GM18951 (cell line): ENCODE measurements at regions of chrX and their contacts with region 1.

Region 1: DNA sequence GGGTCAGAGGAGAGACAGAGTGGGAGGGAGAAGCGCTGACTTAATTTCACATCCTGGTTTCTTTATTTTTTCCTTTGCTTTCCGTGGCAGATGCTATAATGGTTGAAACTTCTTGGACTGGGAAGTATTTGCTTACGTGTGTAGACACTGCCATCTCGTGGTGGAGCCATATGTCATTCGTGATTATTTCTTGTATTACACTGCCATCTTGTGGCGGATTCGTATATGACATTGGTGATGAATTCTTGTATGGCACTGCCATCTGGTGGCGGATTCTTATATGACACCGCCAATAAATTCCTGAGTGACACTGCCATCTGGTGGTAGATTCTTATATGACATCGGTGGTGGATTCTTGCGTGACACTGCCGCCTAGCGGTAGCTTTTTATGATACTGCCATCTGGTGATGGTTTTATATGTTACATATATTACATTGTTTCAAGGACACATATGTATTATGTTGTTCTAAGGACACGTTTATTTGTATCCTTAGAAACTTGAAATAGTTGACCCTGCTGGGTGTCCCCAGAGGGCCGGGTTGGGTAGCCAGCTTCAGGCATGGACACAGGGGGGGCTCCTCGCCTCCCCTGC is 37.3 kb upstream of the CLCN4 start:
- POLR2A ChIP-seq: no peak

Region 2: DNA sequence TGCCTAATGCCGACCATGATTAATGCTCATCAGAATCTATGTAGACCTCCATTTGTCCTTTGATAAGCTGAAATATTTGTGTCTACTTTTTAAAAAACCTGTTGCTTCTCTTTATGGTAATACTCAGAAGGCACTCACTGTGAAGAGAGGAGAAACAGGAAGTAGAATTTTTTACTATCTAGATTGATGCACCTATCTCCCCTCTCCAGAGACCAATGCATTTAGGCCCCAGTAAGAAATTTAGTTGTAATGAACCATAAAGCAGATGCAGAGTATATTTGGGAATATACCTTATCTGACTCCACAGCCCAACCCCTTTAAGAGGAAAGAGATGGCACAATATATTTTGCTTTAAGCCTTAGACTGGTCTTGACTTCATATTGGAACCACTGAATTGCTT is 643.5 kb before region 1 on chrX:
- in situ Hi-C with region 1: no loop called
- POLR2A ChIP-seq: no peak

Region 3: GRCh38 chrX:9885150-9885549 is 234.3 kb before region 1 on chrX:
- in situ Hi-C with region 1: loop called (anchors 25 kb)
- POLR2A ChIP-seq: no peak

Region 4: GRCh38 chrX:9995855-9996339 is 123.6 kb before region 1 on chrX:
- in situ Hi-C with region 1: loop called (anchors 5 kb)
- POLR2A ChIP-seq: no peak